ENCODE measurements at regions of chr15 and their contacts with region 1.

Region 1: DNA sequence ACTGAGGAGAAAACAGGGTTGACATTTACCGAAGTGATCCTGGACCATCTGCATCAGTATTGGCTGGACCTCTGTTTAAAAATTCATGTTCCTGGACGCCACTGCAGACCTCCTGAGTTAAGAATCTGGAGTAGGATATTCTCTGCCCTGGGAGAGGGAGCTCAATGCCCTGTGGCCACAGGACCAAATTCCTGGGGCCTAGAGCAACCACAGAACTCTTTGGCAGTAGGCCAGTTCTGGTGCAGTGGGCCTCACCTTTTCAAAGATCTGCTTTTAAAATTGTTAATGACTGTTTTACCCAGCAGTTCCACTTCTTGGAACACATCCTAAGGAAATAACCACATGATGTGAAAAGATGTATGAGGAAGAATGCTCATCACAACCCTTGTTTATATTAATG is 133.3 kb upstream of the ADPGK start:
- DNase-seq: no peak
- ATAC-seq: no peak
- H3K4me3 ChIP-seq: no peak overlapping the region
- H3K27ac ChIP-seq: no peak overlapping the region
- H3K4me1 ChIP-seq: no peaks in the 10 kb centered on the region
- H3K27me3 ChIP-seq: no peaks in the 10 kb centered on the region
- CTCF ChIP-seq: no peak
- EP300 ChIP-seq: no peak
- POLR2A ChIP-seq: no peak
- RAD21 ChIP-seq: no peak

Region 2: DNA sequence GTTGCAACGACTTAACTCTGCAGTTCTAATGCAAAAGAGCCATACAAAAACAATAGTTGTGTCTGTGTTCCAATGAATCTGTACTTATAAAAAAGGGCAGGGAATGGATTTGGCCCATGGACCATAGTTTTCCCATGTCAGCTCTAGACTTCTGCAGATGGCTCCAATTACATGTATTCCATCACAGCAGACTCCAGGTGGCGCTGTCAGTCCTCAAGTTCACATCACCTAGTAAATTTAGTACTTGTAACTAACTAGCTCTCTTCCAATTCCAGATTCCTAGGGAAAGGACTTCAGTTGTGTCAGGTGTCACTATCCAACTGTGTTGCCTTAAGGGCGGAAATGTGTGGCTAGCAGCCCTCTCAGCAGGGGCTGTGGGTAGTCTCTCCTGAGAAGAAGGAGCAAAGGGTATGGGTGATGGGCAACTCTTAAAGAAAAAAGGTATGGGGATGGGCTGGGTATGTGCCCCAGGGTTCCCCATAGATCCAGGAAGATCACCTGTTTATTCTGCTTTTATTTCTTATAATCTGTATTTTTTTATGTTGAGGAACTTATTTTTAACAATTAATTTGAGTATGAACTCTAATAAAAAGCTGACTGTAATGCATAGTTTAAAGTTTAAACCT is 194.7 kb before region 1 on chr15:
- CTCF ChIA-PET with region 1: no interaction called
- POLR2A ChIA-PET with region 1: no interaction called
- in situ Hi-C with region 1: no loop called
- intact Hi-C with region 1: no loop called
- DNase-seq: peak; percentile 56
- ATAC-seq: peak; percentile 57
- H3K4me3 ChIP-seq: no peak overlapping the region
- H3K27ac ChIP-seq: no peak overlapping the region
- H3K4me1 ChIP-seq: peaks cover 13% of the 10 kb centered on the region
- H3K27me3 ChIP-seq: no peaks in the 10 kb centered on the region
- CTCF ChIP-seq: peak; percentile 82
- EP300 ChIP-seq: no peak
- POLR2A ChIP-seq: no peak
- RAD21 ChIP-seq: peak; percentile 38

Region 3: GRCh38 chr15:72784238-72784876 is 132.5 kb before region 1 on chr15:
- CTCF ChIA-PET with region 1: no interaction called
- POLR2A ChIA-PET with region 1: no interaction called
- in situ Hi-C with region 1: no loop called
- intact Hi-C with region 1: no loop called
- DNase-seq: peak; percentile 62
- ATAC-seq: peak; percentile 34
- H3K4me3 ChIP-seq: peak overlapping the region; percentile 85 to 94 (median 93)
- H3K27ac ChIP-seq: peak overlapping the region; percentile 77
- H3K4me1 ChIP-seq: peaks cover 46% of the 10 kb centered on the region
- H3K27me3 ChIP-seq: peaks cover 0 to 4% of the 10 kb centered on the region in 2 experiments; a peak in 1 of 5 replicates
- CTCF ChIP-seq: peak; percentile 51
- EP300 ChIP-seq: no peak
- POLR2A ChIP-seq: no peak
- RAD21 ChIP-seq: no peak

Region 4: DNA sequence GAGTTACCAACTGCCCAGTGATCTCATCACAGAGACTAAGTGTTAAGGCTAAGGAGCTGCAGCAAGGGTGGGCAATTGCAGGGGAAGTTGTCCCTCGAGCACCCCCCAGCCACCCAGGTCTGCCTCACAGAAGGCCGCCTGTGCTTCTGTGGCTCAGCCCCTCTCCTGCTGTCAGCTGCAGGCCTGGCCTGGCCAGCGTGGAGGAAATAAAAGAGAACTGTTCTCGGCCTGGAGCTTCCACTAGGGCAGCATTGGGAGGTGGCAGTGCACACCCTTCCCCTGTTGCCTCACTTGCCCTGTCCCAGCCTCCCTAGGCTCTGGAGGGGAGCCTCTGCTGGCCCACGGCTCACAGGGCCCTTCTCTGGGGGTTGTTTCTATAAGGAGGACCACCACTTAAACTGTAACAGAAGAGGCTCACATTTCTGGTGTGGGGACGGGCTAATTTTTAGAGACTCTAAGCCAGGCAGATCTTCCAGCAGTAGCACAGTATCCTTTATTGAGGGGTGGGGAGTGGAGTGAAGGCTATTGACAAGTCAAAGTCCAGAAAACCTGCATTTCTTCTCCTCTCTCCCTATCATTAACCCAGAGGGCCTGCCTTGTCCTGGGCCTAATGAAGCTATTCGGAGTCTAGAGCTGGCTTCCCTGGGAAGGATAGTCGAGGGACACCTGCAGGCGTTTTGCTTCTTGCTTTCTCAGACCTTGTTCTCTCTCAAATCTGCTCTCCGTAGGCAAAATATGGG is 57.7 kb before region 1 on chr15:
- CTCF ChIA-PET with region 1: no interaction called
- POLR2A ChIA-PET with region 1: no interaction called
- in situ Hi-C with region 1: no loop called
- intact Hi-C with region 1: loop called (anchors 10 kb)
- DNase-seq: no peak
- ATAC-seq: no peak; the same call in 2 of the 3 replicates
- H3K4me3 ChIP-seq: no peak overlapping the region
- H3K27ac ChIP-seq: no peak overlapping the region
- H3K4me1 ChIP-seq: no peaks in the 10 kb centered on the region
- H3K27me3 ChIP-seq: peaks cover 0 to 3% of the 10 kb centered on the region in 2 experiments; a peak in 2 of 5 replicates
- CTCF ChIP-seq: no peak
- EP300 ChIP-seq: no peak
- POLR2A ChIP-seq: no peak
- RAD21 ChIP-seq: no peak